SK-N-SH (cell line): ENCODE measurements at regions of chr12 and their contacts with region 1.

Region 1: GRCh38 chr12:24991209-24992049 is 42.5 kb upstream of the BCAT1 start:
- DNase-seq: peak; percentile 56
- H3K4me3 ChIP-seq: no peak overlapping the region
- H3K27ac ChIP-seq: no peak overlapping the region
- H3K4me1 ChIP-seq: no peaks in the 10 kb centered on the region
- H3K27me3 ChIP-seq: no peaks in the 10 kb centered on the region
- CTCF ChIP-seq: peak; percentile 75
- EP300 ChIP-seq: no peak
- RAD21 ChIP-seq: peak; percentile 90

Region 2: GRCh38 chr12:24803430-24804245 is 187.8 kb before region 1 on chr12:
- CTCF ChIA-PET with region 1: no interaction called
- POLR2A ChIA-PET with region 1: no interaction called
- DNase-seq: no peak
- H3K4me3 ChIP-seq: no peak overlapping the region
- H3K27ac ChIP-seq: no peak overlapping the region
- H3K4me1 ChIP-seq: no peaks in the 10 kb centered on the region
- H3K27me3 ChIP-seq: no peaks in the 10 kb centered on the region
- CTCF ChIP-seq: no peak
- EP300 ChIP-seq: no peak
- RAD21 ChIP-seq: no peak

Region 3: GRCh38 chr12:24852420-24852819 is 139.0 kb before region 1 on chr12:
- CTCF ChIA-PET with region 1: interaction called, 11 read pairs
- POLR2A ChIA-PET with region 1: no interaction called
- DNase-seq: no peak
- H3K4me3 ChIP-seq: no peak overlapping the region
- H3K27ac ChIP-seq: no peak overlapping the region
- H3K4me1 ChIP-seq: peaks cover 0 to 14% of the 10 kb centered on the region in 2 experiments; a peak in 3 of 4 replicates
- H3K27me3 ChIP-seq: no peaks in the 10 kb centered on the region
- CTCF ChIP-seq: peak; percentile 68
- EP300 ChIP-seq: no peak
- RAD21 ChIP-seq: peak; percentile 51

Region 4: GRCh38 chr12:24931666-24932405 is 59.6 kb before region 1 on chr12:
- CTCF ChIA-PET with region 1: no interaction called
- POLR2A ChIA-PET with region 1: no interaction called
- DNase-seq: no peak
- H3K4me3 ChIP-seq: no peak overlapping the region
- H3K27ac ChIP-seq: no peak overlapping the region; a peak in 1 of 4 replicates
- H3K4me1 ChIP-seq: no peaks in the 10 kb centered on the region; a peak in 1 of 4 replicates
- H3K27me3 ChIP-seq: no peaks in the 10 kb centered on the region
- CTCF ChIP-seq: no peak
- EP300 ChIP-seq: no peak
- RAD21 ChIP-seq: no peak

Region 5: GRCh38 chr12:25009496-25010092 is 18.2 kb after region 1 on chr12:
- CTCF ChIA-PET with region 1: interaction called, 16 read pairs
- POLR2A ChIA-PET with region 1: no interaction called
- DNase-seq: no peak
- H3K4me3 ChIP-seq: no peak overlapping the region
- H3K27ac ChIP-seq: no peak overlapping the region
- H3K4me1 ChIP-seq: no peaks in the 10 kb centered on the region
- H3K27me3 ChIP-seq: no peaks in the 10 kb centered on the region
- CTCF ChIP-seq: no peak
- EP300 ChIP-seq: no peak
- RAD21 ChIP-seq: no peak

Region 6: DNA sequence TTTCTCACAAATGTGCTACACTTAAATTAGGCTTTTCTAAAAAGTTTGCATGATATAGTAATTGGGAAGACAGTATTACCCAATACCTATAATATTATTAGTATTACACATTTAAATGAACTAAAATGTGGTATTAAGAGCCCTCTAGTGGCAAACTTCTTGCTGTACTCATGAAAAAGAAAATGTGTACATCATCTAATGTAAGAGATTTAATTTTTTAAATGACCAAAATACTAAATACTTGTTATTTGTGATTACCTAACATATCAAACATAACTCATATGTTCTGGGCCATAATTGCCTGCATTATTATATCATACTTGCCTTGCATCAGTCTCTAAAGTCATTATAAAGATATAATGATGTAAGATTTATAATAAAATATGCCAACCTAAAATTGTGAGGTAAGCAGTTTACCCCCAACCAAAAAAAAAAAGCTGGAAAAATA is 139.3 kb after region 1 on chr12:
- CTCF ChIA-PET with region 1: interaction called, 45 read pairs
- POLR2A ChIA-PET with region 1: interaction called, 3 read pairs
- DNase-seq: peak; percentile 33
- H3K4me3 ChIP-seq: peak overlapping the region in 1 of 2 experiments; percentile 17; a peak in 1 of 4 replicates
- H3K27ac ChIP-seq: no peak overlapping the region
- H3K4me1 ChIP-seq: no peaks in the 10 kb centered on the region
- H3K27me3 ChIP-seq: no peaks in the 10 kb centered on the region
- CTCF ChIP-seq: peak; percentile 87
- EP300 ChIP-seq: no peak
- RAD21 ChIP-seq: peak; percentile 77

Region 7: DNA sequence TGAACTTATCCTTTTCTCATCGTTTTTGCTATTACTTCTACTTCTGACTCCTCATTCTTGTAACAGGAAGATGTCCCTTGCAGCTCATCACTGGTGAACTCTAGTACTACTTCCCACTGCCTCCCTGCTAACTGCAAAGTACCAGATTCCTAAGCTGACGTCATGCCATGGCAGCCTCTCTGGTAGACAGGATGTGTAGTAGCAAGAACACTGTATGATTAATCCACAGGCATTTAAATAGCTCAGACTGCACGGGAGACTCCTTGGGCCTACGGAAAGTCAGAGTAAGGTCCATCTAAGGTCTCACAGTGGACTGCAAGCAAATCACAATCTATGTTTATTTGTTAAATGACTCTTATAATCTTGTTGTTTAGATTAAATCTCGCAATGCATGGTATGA is 160.0 kb after region 1 on chr12:
- CTCF ChIA-PET with region 1: interaction called, 33 read pairs
- POLR2A ChIA-PET with region 1: no interaction called
- DNase-seq: peak; percentile 15
- H3K4me3 ChIP-seq: no peak overlapping the region
- H3K27ac ChIP-seq: peak overlapping the region; percentile 28 to 75; a peak in 3 of 4 replicates
- H3K4me1 ChIP-seq: peaks cover 0 to 5% of the 10 kb centered on the region in 2 experiments; a peak in 1 of 4 replicates
- H3K27me3 ChIP-seq: no peaks in the 10 kb centered on the region
- CTCF ChIP-seq: no peak
- EP300 ChIP-seq: no peak
- RAD21 ChIP-seq: no peak

Region 8: DNA sequence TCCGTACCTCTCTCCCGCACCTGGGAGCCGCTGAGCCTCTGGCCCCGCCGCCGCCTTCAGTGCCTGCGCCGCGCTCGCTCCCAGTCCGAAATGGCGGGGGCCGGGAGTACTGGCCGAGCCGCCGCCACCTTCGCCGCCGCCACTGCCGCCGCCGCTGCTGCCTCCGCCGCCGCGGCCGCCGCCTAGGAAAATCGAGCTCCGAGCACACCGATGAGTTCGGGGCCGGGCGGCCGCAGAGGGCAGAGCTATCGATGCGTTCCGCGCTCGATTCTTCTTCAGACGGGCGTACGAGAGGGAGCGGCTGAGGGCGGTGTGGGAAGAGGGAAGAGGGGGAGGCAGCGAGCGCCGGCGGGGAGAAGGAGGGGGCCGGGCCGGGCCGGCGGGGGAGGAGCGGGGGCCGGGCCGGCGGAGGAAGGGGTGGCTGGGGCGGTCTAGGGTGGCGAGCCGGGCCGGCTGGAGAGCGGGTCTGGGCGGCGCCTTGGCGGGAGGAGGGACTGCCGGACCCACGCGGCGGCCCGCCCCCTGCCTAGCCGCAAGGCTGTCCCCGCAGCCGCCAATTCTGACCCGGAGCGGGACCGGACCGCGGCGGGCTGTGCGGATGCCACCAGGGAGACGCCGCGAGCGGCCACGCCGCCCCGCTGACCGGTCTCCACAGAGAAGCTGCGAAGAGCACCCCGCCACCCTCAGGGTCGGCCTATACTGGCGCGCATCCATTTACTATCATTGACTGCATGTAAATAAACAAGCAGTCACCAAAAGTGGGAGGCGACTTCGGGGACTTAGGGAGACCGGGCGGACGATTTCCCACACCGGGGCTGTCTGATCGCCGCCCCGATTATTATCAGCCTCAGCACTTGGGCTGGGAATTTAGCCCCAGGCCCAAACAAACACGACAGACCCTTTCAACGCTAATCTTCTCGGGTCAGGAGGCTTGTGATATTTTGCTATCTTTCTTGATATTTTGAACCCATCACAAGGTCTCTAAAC is 259.6 kb after region 1 on chr12 and contains the start of gene KRAS:
- CTCF ChIA-PET with region 1: no interaction called
- POLR2A ChIA-PET with region 1: no interaction called
- DNase-seq: peak; percentile 97
- H3K4me3 ChIP-seq: peak within 1 kb of the TSS; percentile 86 to 91
- H3K27ac ChIP-seq: peak within 1 kb of the TSS; percentile 74 to 91
- H3K4me1 ChIP-seq: peaks cover 7 to 8% of the 10 kb centered on the region in 2 experiments; a peak in 3 of 4 replicates
- H3K27me3 ChIP-seq: no peaks in the 10 kb centered on the region
- CTCF ChIP-seq: no peak
- EP300 ChIP-seq: peak; percentile 59 to 60; a peak in 3 of 4 replicates
- RAD21 ChIP-seq: no peak; the same call in 1 of the 2 replicates
- polyA plus RNA-seq, gene KRAS: 8.0 and 9.4 TPM in 2 replicates